Ascending aorta (tissue), 2 donors: ENCODE measurements at regions of chr9 and their contacts with region 1.

Region 1: GRCh38 chr9:105414947-105415661 is 32.7 kb upstream of the FSD1L start:
- DNase-seq: peak in 1 of 2 donors; percentile 69
- H3K4me3 ChIP-seq: no peak overlapping the region
- H3K27ac ChIP-seq: no peak overlapping the region
- H3K4me1 ChIP-seq: no peaks in the 10 kb centered on the region
- H3K27me3 ChIP-seq: no peaks in the 10 kb centered on the region
- CTCF ChIP-seq: peak; percentile 80 to 89 (median 81)

Region 2: DNA sequence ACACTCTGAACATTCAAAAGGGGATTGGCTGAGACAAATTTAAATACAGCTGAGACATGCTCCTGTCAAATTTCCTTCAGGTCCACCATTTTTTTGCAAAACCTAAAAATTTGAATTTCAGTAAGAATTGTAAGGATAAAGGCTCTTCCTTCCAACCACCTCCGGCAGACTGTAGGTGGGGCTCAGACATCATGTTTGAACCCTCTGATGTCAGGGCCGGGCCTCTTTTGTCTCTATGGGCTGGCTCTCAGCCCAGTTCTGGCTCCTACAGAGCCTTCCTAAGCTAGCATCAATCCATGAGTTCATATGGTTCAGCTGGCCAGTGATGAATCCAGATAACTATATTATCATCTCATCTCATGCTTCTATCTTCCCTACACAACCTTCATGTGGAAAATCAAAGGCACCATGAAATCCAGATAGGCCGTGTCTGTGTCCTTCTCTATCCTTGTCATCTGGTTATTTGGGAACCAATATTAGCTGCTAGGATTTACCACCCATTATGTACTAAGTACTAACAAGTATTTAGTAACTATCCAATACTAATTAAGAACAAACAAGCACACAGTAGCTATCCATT is 607.0 kb before region 1 on chr9:
- intact Hi-C with region 1: loop called (anchors 10 kb)
- DNase-seq: no peak
- H3K4me3 ChIP-seq: no peak overlapping the region
- H3K27ac ChIP-seq: no peak overlapping the region
- H3K4me1 ChIP-seq: no peaks in the 10 kb centered on the region
- H3K27me3 ChIP-seq: no peaks in the 10 kb centered on the region
- CTCF ChIP-seq: peak in 1 of 3 experiments; percentile 23

Region 3: GRCh38 chr9:104863180-104863883 is 551.8 kb before region 1 on chr9:
- intact Hi-C with region 1: loop called (anchors 5 kb)
- DNase-seq: no peak
- H3K4me3 ChIP-seq: no peak overlapping the region
- H3K27ac ChIP-seq: no peak overlapping the region
- H3K4me1 ChIP-seq: peaks cover 6 to 16% of the 10 kb centered on the region in 2 donors
- H3K27me3 ChIP-seq: no peaks in the 10 kb centered on the region
- CTCF ChIP-seq: peak; percentile 46 to 62 (median 61)

Region 4: DNA sequence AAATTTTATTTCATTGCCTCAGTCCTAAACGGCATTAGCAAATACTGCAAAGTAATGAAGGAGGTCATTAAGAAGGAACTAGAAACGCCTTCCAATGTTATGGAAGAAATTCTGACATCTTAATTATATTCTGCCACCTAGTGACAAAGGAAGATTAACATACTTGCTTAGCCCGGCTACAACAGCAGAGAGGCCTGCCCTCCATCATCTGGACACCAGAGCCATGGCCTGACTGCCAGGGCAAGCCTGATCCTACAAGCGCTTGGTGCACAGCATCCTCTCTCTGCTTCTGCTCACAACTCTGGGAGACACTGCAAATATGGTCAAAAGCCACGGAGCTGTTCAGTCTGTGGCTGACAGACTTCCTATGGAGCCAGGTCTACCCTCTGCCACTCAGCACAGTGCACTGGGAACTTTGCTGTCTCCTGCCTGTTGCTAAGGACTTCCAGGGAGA is 257.9 kb before region 1 on chr9:
- intact Hi-C with region 1: loop called (anchors 5 kb)
- DNase-seq: peak in 1 of 2 donors; percentile 74
- H3K4me3 ChIP-seq: no peak overlapping the region
- H3K27ac ChIP-seq: no peak overlapping the region
- H3K4me1 ChIP-seq: no peaks in the 10 kb centered on the region
- H3K27me3 ChIP-seq: no peaks in the 10 kb centered on the region
- CTCF ChIP-seq: peak; percentile 21 to 50 (median 27)